ENCODE measurements at regions of chr12 and their contacts with region 1.

Region 1: GRCh38 chr12:15532364-15532977 is 210.2 kb downstream of the PTPRO start:
- H3K4me3 ChIP-seq: no peak overlapping the region
- H3K27ac ChIP-seq: no peak overlapping the region
- H3K4me1 ChIP-seq: peaks cover 9% of the 10 kb centered on the region
- CTCF ChIP-seq: peak; percentile 42; the same call in 1 of the 2 replicates

Region 2: GRCh38 chr12:15341371-15341770 is 191.1 kb before region 1 on chr12:
- CTCF ChIA-PET with region 1: no interaction called
- POLR2A ChIA-PET with region 1: no interaction called
- H3K4me3 ChIP-seq: no peak overlapping the region
- H3K27ac ChIP-seq: no peak overlapping the region
- H3K4me1 ChIP-seq: no peaks in the 10 kb centered on the region; the same call in 1 of the 2 replicates
- CTCF ChIP-seq: no peak

Region 3: DNA sequence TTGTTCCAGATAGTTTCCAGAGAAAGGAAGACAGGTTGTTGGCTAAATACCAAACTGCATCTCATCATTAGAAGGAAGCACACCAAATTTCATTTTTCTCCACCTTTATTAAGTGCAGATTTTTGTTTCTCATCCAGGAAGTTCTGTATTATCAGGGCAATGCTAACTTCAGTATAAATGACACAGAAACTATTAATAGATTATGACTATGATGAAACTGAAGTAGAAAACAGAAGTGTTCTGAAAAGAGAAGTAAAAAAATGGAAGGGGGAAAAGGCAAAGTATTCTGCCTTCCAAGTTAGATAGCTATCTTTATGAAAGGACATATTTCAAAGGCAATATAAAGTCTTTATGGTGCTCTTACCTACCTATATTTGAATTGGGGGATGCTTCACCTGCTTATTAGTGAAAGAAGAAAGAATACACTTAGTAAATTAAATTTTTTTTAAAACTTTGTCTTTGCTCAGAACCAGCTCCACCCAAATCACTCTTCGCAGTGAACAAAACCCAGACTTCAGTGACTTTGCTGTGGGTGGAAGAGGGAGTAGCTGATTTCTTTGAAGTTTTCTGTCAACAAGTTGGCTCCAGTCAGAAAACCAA is 13.7 kb after region 1 on chr12:
- CTCF ChIA-PET with region 1: interaction called, 11 read pairs
- POLR2A ChIA-PET with region 1: no interaction called
- H3K4me3 ChIP-seq: no peak overlapping the region
- H3K27ac ChIP-seq: no peak overlapping the region
- H3K4me1 ChIP-seq: no peaks in the 10 kb centered on the region
- CTCF ChIP-seq: no peak

Region 4: DNA sequence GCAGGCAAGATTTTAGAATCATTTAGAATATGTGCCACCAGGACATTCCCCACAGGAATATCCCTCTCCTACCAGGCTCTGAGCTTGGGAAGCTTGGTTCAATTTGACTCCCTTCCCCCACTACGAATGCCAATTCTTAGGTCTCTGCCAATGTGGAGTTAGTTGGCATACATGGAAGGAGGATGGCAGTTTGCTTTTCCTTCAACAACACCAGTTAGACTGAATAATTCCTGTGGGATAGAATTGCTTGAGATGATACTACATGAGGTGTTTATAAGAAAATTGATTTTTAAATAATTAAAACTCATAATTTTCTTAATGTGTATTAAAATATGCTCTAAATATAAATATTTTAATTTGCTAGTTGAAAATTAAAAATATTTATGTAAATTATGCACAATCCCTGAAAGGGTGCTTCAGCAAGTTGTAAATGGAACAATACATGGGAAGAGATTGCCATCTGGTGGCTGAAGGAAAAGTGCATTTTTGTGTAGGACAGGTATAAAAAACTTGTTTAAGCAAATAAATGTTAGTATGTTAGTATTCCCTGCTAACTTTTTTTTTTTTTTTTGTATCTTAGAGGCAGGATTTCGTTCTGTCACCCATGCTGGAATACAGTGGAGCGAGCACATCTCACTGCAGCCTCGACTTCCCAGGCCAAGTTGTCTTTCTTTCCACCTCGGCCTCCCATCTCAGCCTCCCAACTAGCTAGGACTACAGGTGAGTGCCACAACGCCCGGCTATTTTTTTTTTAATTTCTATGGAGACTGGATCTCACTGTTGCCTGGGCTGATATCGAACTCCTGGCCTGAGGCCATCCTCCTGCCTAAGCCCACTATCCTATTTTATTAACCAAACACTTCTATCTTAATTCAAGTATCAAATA is 323.9 kb after region 1 on chr12:
- CTCF ChIA-PET with region 1: interaction called, 24 read pairs
- POLR2A ChIA-PET with region 1: no interaction called
- H3K4me3 ChIP-seq: no peak overlapping the region
- H3K27ac ChIP-seq: no peak overlapping the region
- H3K4me1 ChIP-seq: no peaks in the 10 kb centered on the region
- CTCF ChIP-seq: peak; percentile 40; the same call in 1 of the 2 replicates